ENCODE measurements at regions of chr3 and their contacts with region 1.

Region 1: GRCh38 chr3:101809178-101810021 is 30.4 kb downstream of the NXPE3 start:
- DNase-seq: peak in 1 of 2 donors; percentile 69
- H3K4me3 ChIP-seq: no peak overlapping the region
- H3K27ac ChIP-seq: no peak overlapping the region
- H3K4me1 ChIP-seq: peaks cover 0 to 29% (median 16%) of the 10 kb centered on the region in 4 donors
- H3K27me3 ChIP-seq: no peaks in the 10 kb centered on the region
- CTCF ChIP-seq: peak in 5 of 7 experiments; percentile 28 to 66 (median 51)
- EP300 ChIP-seq: no peak
- POLR2A ChIP-seq: no peak

Region 2: GRCh38 chr3:102229062-102229655 is 419.8 kb after region 1 on chr3:
- intact Hi-C with region 1: loop called (anchors 5 kb)
- DNase-seq: peak; percentile 80 to 91
- H3K4me3 ChIP-seq: no peak overlapping the region
- H3K27ac ChIP-seq: no peak overlapping the region
- H3K4me1 ChIP-seq: peaks cover 0 to 18% (median 8%) of the 10 kb centered on the region in 4 donors
- H3K27me3 ChIP-seq: no peaks in the 10 kb centered on the region
- CTCF ChIP-seq: peak in 6 of 7 experiments; percentile 54 to 96 (median 90)
- EP300 ChIP-seq: no peak
- POLR2A ChIP-seq: no peak